ENCODE measurements at regions of chr6 and their contacts with region 1.

Region 1: GRCh38 chr6:36623547-36624459 is 29.6 kb downstream of the SRSF3 start:
- ATAC-seq: peak; percentile 62 to 92 (median 88)
- H3K4me3 ChIP-seq: no peak overlapping the region
- H3K27ac ChIP-seq: no peak overlapping the region
- H3K4me1 ChIP-seq: no peaks in the 10 kb centered on the region

Region 2: GRCh38 chr6:36350681-36351571 is 272.9 kb before region 1 on chr6:
- in situ Hi-C with region 1: no loop called
- ATAC-seq: peak in 5 of 8 experiments; percentile 31 to 64 (median 57)
- H3K4me3 ChIP-seq: no peak overlapping the region
- H3K27ac ChIP-seq: no peak overlapping the region
- H3K4me1 ChIP-seq: peaks cover 7 to 10% of the 10 kb centered on the region in 2 donors

Region 3: DNA sequence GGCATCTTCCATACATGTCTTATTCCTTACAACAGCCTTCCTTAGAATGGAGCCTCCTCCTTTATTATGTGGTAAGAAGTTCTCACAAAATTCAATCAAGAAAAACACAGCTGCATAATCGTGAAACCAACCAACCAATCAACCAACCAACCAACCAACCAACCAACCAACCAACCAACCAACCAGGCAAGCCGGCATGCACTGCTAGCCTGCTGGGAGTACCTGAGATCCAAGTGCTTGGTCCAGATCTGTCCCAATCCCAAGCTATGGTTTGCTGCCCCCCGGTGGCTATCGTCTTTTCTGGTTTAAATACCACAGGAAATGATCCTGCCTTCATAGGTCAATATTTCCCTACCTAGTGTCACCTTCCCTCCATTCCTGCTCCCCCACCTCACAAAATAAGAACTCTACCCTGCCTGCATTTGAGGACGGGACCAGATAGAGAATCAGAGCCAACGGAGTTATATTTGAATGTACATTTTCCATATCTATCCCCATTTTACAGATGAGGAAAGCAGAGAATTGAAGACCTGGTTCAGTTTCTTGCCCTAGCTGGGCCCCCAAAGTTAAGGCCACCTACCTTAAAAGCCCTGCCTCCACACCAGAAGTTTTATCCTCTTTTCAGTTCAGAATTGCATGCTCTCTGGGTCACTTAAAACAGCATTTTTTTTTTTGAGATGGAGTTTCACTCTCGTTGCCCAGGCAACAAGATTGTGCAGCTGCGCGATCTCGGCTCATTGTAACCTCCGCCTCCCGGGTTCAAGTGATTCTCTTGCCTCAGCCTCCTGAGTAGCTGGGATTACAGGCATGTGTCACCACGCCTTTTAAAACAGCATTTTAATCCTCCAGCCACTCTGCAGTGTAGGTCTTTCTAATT is 100.9 kb after region 1 on chr6:
- in situ Hi-C with region 1: loop called in 2 of 9 experiments (anchors 25 kb)
- ATAC-seq: peak; percentile 12 to 85 (median 36)
- H3K4me3 ChIP-seq: no peak overlapping the region
- H3K27ac ChIP-seq: no peak overlapping the region
- H3K4me1 ChIP-seq: peaks cover 7 to 13% of the 10 kb centered on the region in 2 donors

Region 4: DNA sequence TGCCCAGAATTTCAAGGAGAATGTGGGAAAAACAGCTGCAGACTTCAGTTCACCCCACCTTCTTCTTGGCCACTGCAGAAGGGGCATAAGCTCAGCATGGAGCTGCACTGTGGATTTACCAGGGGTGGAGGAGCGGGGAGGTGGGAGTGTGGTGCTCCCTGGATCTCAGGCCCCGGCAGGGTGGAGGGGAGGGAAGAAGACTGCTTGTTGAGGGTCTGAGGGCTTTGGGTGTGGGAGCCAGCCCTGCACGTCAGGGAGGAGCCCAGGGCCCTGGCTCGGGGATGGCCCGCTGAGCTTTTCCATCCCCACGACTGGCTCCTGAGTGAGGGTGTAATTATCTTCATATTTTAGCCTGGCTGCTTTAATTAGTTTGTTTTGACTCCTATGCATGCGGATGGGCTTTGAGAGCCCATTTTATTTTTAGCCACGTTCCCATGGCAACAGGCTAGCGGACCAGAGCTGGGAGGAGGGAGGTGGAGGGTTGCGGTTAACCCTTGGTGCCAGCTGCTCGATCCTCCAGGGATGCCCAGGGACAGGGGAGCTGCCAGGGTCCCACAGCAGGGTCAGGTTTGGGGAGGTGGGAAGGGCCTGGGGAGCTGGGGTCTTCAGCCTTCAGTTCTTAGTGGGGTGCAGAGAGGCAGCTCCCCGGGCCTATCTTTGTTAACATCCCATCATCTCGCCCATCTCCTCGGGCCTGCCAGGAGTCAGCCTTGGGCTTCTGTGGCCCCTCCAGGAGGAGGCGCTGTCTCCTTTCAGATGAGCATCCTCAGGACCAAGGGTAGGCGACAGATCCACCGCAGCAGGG is 142.0 kb after region 1 on chr6:
- in situ Hi-C with region 1: loop called in 2 of 9 experiments (anchors 25 kb)
- ATAC-seq: peak; percentile 89 to 99 (median 92)
- H3K4me3 ChIP-seq: no peak overlapping the region
- H3K27ac ChIP-seq: no peak overlapping the region
- H3K4me1 ChIP-seq: peaks cover 21 to 30% of the 10 kb centered on the region in 2 donors

Region 5: DNA sequence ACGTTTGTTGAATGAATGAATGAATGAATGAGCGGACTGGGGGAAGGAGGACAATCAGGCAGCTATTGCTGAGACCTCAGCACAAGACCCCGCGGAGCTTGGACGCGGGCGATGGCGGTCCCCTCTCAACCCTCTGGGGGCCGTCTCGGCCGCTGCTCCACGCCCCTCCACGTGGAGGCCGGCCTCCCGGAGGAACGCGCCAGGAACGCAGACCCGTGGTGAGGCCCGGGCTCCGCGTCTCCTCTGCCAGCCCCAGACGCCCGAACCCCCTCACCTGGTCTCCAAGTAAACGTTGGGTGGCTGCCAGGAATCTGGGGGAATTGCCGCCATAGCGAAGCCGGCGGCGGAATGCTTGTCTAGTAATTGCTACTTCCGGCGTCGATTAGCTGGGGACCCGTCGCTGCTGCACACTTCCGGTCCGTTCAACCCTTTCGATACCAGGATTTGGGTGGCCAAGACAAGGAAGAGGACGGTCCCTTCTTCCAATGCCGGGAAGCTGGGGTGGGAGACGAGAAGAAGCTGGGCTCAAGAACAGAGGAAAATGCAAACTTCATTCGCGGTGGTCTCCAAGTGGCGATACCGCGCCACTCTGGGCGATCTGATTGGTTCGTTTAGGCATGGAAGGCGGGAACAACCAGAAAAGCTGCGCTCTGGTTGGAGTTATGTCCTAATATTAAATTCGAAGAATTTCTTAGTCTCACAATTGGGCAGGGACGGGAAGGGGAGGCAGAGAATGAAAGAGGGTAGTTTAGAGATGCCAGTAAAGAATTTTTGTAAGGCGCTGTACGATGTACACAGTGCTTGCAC is 250.8 kb after region 1 on chr6 and contains the start of gene PPIL1:
- in situ Hi-C with region 1: loop called in 2 of 9 experiments (anchors 25 kb)
- ATAC-seq: peak; percentile 91 to 93 (median 92)
- H3K4me3 ChIP-seq: peak within 1 kb of the TSS; percentile 76 to 99 (median 89)
- H3K27ac ChIP-seq: peak within 1 kb of the TSS; percentile 97
- H3K4me1 ChIP-seq: peaks cover 8 to 14% of the 10 kb centered on the region in 2 donors
- total RNA-seq, gene PPIL1: 36.4 to 77.1 (median 48.4) TPM